Activated CD8-positive, alpha-beta memory T cell treated with anti-CD3 and anti-CD28 coated beads, Interleukin-2, amount 10 ng/mL, durations not matched to agents 7 days and 5 days (primary cell): ENCODE measurements at regions of chr17 and their contacts with region 1.

Region 1: GRCh38 chr17:1374431-1375177 is 25.4 kb downstream of the YWHAE start:
- DNase-seq: no peak
- ATAC-seq: peak; percentile 48
- H3K4me3 Mint-ChIP-seq: no peak overlapping the region
- H3K27ac Mint-ChIP-seq: peak overlapping the region; percentile 41
- H3K4me1 Mint-ChIP-seq: peaks cover 71% of the 10 kb centered on the region
- H3K27me3 Mint-ChIP-seq: no peaks in the 10 kb centered on the region

Region 2: DNA sequence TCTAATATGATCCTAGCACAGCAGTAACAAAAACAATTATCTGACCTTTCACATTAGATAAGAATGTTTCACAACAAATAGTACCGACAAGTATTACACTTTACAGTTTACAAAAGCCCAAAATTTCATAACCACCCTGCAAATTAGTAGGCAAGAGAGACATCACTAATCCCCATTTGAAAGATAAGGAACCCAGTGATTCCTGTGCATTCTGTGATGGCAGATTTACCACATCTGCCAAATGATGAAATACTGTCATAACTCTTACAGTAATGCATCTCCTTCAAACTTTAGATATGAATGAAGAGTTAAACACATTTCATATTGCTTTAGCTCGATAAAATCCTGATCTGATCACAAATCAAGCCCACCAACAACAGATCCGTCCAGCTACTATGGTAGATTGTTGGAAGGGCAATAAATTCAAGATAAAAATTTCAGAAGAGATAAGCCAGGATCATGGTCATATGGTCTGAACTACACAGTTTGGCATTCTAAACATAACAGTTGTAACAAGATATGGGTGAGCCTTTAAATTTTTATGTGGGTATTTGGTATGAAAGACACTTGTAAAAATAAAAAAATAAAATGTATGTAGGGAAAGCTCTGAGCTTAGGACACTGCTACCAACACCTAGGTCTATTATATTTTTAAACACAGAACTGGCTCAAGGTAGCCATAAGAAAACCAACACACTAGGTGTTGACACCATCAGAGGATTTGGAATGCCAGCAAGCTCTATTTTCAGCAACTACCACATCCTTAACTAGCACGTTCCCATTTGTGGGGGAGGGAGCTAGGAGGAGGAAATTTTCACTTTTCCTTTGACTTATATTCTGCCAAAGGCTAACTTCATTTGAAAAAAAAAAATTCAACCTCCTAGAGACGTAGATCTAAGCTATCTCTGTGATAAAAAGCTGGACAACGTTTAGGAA is 16.1 kb after region 1 on chr17:
- CTCF ChIA-PET with region 1: interaction called, 16 read pairs
- DNase-seq: no peak
- ATAC-seq: no peak
- H3K4me3 Mint-ChIP-seq: no peak overlapping the region
- H3K27ac Mint-ChIP-seq: peak overlapping the region; percentile 50
- H3K4me1 Mint-ChIP-seq: peaks cover 63% of the 10 kb centered on the region
- H3K27me3 Mint-ChIP-seq: no peaks in the 10 kb centered on the region